Gastrocnemius medialis (tissue), 4 donors: ENCODE measurements at regions of chr6 and their contacts with region 1.

Region 1: GRCh38 chr6:13908955-13909381 is 15.8 kb upstream of the RNF182 start:
- DNase-seq: peak; percentile 4 to 19
- ATAC-seq: peak; percentile 58 to 64
- H3K4me3 ChIP-seq: no peak overlapping the region
- H3K27ac ChIP-seq: no peak overlapping the region
- H3K4me1 ChIP-seq: no peaks in the 10 kb centered on the region
- H3K27me3 ChIP-seq: peaks cover 0 to 4% (median 0%) of the 10 kb centered on the region in 3 donors
- CTCF ChIP-seq: peak; percentile 48 to 84 (median 67)
- POLR2A ChIP-seq: no peak

Region 2: DNA sequence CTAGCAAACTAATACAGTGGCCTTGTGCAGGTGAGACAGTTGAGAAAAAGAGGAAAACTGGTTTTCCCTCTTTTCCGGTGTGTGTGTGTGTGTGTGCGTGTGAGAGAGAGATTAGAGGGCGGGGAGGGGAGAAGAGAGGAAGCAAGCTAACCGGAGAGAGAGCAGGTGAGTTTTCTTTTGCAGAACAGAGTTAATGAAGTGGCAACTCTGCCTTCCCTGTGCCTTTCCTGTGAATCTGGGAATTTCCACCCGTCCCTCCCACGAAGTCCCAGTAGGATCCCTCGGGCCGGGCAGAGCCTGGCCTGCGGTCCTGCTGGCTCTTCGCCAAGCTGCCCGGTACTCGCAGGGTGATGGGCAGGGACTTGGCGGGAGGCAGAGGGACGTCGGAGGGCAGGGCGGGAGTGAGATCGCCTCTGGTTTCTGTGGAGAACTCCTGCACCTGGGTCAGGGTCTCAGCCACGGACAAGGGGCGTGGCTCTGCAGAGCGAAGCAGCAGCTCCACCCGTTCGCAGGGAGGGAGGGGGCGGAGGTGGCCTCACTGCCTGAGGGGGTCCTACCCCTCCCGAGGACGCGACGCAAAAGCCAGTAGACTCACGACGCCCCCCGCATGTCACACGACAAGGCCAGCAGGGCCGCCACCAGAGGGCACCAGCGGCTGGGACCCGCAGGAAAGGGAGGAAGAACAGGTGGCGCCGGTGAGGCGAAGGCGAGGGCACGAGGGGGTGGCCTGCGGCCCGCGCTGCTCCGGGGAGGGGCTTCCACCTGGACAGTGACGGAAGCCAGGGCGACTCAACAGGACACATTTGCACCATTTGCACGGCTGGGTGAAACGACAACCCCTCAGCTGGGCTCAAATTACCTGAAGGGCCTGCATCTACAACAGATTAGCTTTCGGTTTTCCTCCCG is 35.4 kb before region 1 on chr6:
- in situ Hi-C with region 1: no loop called
- intact Hi-C with region 1: no loop called
- DNase-seq: peak; percentile 5 to 20
- ATAC-seq: peak in 1 of 2 donors; percentile 55
- H3K4me3 ChIP-seq: peak overlapping the region; percentile 47 to 69 (median 50)
- H3K27ac ChIP-seq: no peak overlapping the region
- H3K4me1 ChIP-seq: peaks cover 0 to 11% of the 10 kb centered on the region in 2 donors
- H3K27me3 ChIP-seq: no peaks in the 10 kb centered on the region
- CTCF ChIP-seq: peak; percentile 23 to 72 (median 53)
- POLR2A ChIP-seq: no peak

Region 3: DNA sequence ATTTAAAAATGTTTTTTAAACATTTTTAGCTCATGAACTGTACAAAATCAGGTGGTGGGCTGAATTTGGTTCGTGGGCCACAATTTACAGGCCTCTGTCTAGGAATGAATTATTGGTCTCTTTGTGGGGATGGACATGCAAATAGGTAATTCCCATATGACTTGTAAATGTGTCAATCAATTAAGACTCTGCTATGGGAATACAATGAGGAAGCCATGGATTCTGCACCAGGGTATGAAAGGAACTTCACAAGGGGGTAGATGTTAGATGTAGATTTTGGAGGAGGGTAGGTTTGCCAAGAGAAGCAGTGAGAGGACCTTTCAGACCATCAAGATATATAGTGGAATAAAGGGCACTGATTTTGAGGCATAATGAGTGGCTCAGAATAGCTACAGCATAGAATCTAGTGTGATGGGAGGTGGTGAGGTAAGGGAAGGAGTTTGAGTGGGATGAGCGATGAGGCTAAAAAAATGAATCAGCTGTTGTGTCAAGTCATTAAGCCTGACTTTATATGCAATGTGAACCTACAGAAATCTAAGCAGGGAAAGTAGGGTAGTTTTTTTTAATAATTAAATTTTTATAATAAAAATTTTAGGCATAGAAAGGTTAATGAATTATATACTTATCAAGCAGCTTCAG is 16.8 kb before region 1 on chr6:
- in situ Hi-C with region 1: no loop called
- intact Hi-C with region 1: no loop called
- DNase-seq: no peak
- ATAC-seq: no peak
- H3K4me3 ChIP-seq: no peak overlapping the region
- H3K27ac ChIP-seq: no peak overlapping the region
- H3K4me1 ChIP-seq: no peaks in the 10 kb centered on the region
- H3K27me3 ChIP-seq: no peaks in the 10 kb centered on the region
- CTCF ChIP-seq: no peak
- POLR2A ChIP-seq: no peak

Region 4: DNA sequence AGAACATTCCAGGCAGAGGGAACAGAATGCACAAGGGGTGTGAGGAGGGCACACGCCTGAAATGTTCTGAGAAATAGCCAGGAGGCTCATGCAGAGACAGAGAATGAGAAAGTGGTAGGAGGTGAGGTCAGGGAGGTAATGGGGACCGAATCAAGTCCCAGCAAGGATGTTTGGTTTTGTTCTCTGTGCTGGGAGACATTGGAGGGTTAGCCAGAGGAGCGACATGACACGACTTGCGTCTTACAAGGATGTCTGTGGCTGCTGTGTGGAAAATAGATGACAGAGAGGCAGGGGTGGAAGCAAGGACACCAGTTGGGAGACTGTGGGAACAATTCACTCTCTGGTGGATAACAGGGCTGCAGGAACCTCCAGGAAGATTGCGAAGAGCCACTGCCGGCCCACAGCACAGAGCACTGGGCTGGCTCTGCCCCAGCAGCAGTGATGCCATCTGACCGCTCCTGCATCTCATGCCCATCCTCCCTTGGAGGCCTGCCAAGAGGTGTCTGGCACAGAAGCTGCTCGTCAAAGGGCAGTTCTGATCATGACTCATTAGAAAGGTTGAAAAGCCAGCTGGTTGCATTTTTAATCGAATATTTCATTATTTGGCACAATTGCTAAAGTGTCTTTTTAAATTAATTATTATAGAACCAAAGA is 150.9 kb after region 1 on chr6:
- in situ Hi-C with region 1: loop called (anchors 5 to 10 kb)
- intact Hi-C with region 1: no loop called
- DNase-seq: peak in 1 of 2 donors; percentile 12
- ATAC-seq: no peak
- H3K4me3 ChIP-seq: no peak overlapping the region
- H3K27ac ChIP-seq: no peak overlapping the region
- H3K4me1 ChIP-seq: no peaks in the 10 kb centered on the region
- H3K27me3 ChIP-seq: peaks cover 0 to 23% (median 10%) of the 10 kb centered on the region in 3 donors
- CTCF ChIP-seq: no peak
- POLR2A ChIP-seq: no peak

Region 5: GRCh38 chr6:14066782-14067406 is 157.9 kb after region 1 on chr6:
- in situ Hi-C with region 1: loop called (anchors 5 to 10 kb)
- intact Hi-C with region 1: loop called (anchors 2 kb)
- DNase-seq: no peak
- ATAC-seq: peak; percentile 56 to 78
- H3K4me3 ChIP-seq: no peak overlapping the region
- H3K27ac ChIP-seq: no peak overlapping the region
- H3K4me1 ChIP-seq: no peaks in the 10 kb centered on the region
- H3K27me3 ChIP-seq: peaks cover 0 to 10% (median 4%) of the 10 kb centered on the region in 3 donors
- CTCF ChIP-seq: peak; percentile 54 to 70 (median 62)
- POLR2A ChIP-seq: no peak

Region 6: DNA sequence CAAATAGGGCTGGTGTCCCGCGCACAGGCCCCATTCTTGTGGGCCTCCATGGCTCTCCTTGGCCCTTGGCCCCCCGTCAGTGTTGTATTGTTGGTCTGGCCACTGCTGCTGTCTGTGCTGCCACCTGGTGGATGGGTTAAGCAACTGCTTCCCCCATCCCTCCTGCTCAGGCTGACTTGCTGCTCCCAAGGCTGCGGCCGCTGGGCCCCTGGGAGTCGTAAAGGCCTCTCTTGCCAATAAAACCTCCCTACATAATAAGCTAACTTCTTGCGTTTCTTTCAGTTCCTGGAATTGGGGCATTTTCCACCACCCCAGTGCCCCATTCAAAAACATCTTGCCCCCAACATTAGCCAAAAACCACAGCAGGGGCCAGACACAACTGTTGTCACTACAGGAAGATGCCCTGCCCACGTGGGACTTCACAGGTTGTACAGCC is 235.7 kb after region 1 on chr6:
- in situ Hi-C with region 1: loop called (anchors 5 to 10 kb)
- intact Hi-C with region 1: loop called (anchors 2 kb)
- DNase-seq: peak; percentile 24 to 35
- ATAC-seq: peak; percentile 52 to 84
- H3K4me3 ChIP-seq: no peak overlapping the region
- H3K27ac ChIP-seq: no peak overlapping the region
- H3K4me1 ChIP-seq: peaks cover 0 to 8% of the 10 kb centered on the region in 2 donors
- H3K27me3 ChIP-seq: no peaks in the 10 kb centered on the region
- CTCF ChIP-seq: peak; percentile 58 to 92 (median 79)
- POLR2A ChIP-seq: no peak